ENCODE measurements at regions of chr11 and their contacts with region 1.

Region 1: GRCh38 chr11:85854557-85855340 is 434 bp upstream of the CCDC83 start:
- H3K4me3 Mint-ChIP-seq: peak overlapping the region; percentile 87
- H3K27ac Mint-ChIP-seq: peak overlapping the region; percentile 97
- H3K4me1 Mint-ChIP-seq: peaks cover 16% of the 10 kb centered on the region
- H3K27me3 Mint-ChIP-seq: no peaks in the 10 kb centered on the region

Region 2: GRCh38 chr11:85595285-85595884 is 259.4 kb before region 1 on chr11:
- intact Hi-C with region 1: loop called (anchors 5 kb)
- H3K4me3 Mint-ChIP-seq: no peak overlapping the region
- H3K27ac Mint-ChIP-seq: no peak overlapping the region
- H3K4me1 Mint-ChIP-seq: peaks cover 5% of the 10 kb centered on the region
- H3K27me3 Mint-ChIP-seq: peaks cover 2% of the 10 kb centered on the region

Region 3: DNA sequence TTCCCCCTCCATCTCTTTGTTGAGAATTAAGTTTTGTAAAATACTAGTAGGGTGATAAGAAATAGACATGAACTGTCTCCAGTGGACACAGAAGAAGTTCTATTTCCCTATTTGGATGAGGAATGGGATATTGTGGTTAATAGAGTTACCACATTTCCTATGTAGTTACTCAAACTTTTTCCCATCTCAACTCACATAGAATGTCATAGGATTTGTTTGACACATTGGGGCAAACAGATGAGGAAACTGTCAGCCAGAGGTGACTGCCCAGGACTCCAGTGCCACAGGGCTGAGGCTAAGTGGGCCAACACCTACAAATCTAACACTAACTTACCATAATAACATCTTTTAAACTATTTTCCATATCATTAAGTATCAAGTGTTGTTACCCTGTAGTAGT is 58.8 kb after region 1 on chr11:
- intact Hi-C with region 1: no loop called
- H3K4me3 Mint-ChIP-seq: no peak overlapping the region
- H3K27ac Mint-ChIP-seq: no peak overlapping the region
- H3K4me1 Mint-ChIP-seq: peaks cover 27% of the 10 kb centered on the region
- H3K27me3 Mint-ChIP-seq: peaks cover 9% of the 10 kb centered on the region

Region 4: GRCh38 chr11:85947431-85948272 is 92.9 kb after region 1 on chr11:
- intact Hi-C with region 1: loop called (anchors 5 kb)
- H3K4me3 Mint-ChIP-seq: no peak overlapping the region
- H3K27ac Mint-ChIP-seq: peak overlapping the region; percentile 48
- H3K4me1 Mint-ChIP-seq: peaks cover 40% of the 10 kb centered on the region
- H3K27me3 Mint-ChIP-seq: no peaks in the 10 kb centered on the region

Region 5: DNA sequence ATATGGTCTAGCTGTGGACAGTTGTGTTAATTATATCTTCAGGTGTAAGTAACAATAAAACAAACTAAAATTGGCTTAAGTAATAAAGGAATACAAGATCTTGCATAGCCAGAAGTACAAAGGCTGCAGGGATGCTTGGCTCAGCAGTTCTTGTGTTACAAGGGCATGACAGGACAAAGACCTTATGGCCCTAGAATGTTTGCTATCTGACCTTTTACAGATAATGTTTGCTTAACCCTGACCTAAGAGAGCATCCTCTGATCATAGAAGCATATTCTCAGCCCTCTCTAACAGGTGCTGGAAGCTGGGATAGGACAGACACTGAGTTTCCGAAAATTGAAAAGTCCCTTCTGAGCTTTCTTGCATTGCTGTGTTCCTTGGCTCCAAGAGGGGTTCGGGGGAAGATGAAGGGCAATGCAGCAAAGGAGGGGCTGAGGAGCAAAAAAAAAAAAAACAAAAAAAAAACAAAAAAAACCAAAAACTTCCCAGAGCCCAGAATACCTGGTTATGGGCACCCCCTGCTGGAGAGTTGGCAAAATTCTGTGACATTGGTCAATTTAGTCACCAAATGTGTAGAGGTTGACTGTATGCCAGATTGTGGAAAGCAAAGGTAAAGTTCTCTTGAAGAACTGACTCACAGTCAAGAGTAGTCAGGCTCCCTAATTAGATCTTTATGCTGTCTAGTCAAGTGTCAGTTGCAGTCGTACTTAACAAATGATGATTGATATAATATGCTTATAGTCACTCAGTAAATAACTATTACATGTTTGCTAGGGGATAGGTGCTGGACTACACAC is 436.9 kb after region 1 on chr11:
- intact Hi-C with region 1: loop called (anchors 2 kb)
- H3K4me3 Mint-ChIP-seq: no peak overlapping the region
- H3K27ac Mint-ChIP-seq: no peak overlapping the region
- H3K4me1 Mint-ChIP-seq: no peaks in the 10 kb centered on the region
- H3K27me3 Mint-ChIP-seq: peaks cover 2% of the 10 kb centered on the region

Region 6: GRCh38 chr11:87359401-87359800 is 1504.7 kb after region 1 on chr11:
- intact Hi-C with region 1: no loop called
- H3K4me3 Mint-ChIP-seq: no peak overlapping the region
- H3K27ac Mint-ChIP-seq: no peak overlapping the region
- H3K4me1 Mint-ChIP-seq: no peaks in the 10 kb centered on the region
- H3K27me3 Mint-ChIP-seq: no peaks in the 10 kb centered on the region